Naive thymus-derived CD4-positive, alpha-beta T cell (primary cell): ENCODE measurements at regions of chr2 and their contacts with region 1.

Region 1: DNA sequence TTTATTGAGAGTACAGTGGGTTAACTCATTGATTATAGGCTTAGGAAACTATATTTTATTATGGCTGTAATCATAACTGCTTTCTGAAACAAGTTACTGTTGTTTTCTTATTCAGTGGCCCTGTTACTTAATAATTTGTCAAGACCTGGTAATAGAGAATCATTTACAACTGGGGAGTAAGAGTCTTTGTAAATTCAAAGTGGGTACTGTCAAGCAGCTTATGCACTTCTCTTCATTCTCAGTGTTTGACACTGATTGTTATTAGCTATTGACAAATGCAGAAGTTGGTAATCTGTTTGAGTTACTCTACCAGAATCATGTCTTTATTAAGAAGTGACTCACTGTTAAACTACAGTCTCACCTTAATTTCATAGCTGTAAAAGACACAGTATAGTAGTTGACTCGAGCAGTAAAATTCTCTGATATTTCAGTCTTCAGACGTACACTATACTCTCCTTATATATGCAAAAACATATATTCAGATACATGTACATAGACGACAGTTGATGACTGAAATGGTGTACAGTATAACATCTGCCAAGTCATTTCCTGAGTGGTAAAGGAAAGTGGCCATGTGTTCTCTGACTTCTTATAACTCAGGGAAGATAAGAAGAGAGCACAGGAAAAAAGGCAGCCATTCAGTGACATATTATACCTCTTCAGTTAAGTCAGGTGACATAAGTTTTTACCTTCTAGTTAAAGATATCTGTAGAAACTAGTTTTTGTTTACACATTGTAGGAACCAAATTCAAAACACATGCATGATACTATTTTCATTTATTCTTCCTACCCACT is 36.0 kb upstream of the TTC27 start:
- DNase-seq: peak in 6 of 9 donors; percentile 5 to 42 (median 25)
- ATAC-seq: peak; percentile 85
- H3K4me3 ChIP-seq: no peak overlapping the region
- H3K4me3 Mint-ChIP-seq: peak overlapping the region in 5 of 10 donors; percentile 8 to 58 (median 28)
- H3K27ac ChIP-seq: no peak overlapping the region
- H3K27ac Mint-ChIP-seq: peak overlapping the region; percentile 47 to 87 (median 72)
- H3K4me1 ChIP-seq: peaks cover 0 to 5% of the 10 kb centered on the region in 2 donors
- H3K4me1 Mint-ChIP-seq: peaks cover 6 to 45% (median 37%) of the 10 kb centered on the region in 7 donors
- H3K27me3 ChIP-seq: no peaks in the 10 kb centered on the region
- H3K27me3 Mint-ChIP-seq: no peaks in the 10 kb centered on the region

Region 2: GRCh38 chr2:31762085-31762484 is 829.8 kb before region 1 on chr2:
- CTCF ChIA-PET with region 1: no interaction called
- POLR2A ChIA-PET with region 1: no interaction called
- intact Hi-C with region 1: no loop called
- DNase-seq: no peak
- ATAC-seq: no peak
- H3K4me3 ChIP-seq: no peak overlapping the region
- H3K4me3 Mint-ChIP-seq: no peak overlapping the region
- H3K27ac ChIP-seq: no peak overlapping the region
- H3K27ac Mint-ChIP-seq: no peak overlapping the region
- H3K4me1 ChIP-seq: no peaks in the 10 kb centered on the region
- H3K4me1 Mint-ChIP-seq: no peaks in the 10 kb centered on the region
- H3K27me3 ChIP-seq: no peaks in the 10 kb centered on the region
- H3K27me3 Mint-ChIP-seq: peaks cover 0 to 10% (median 4%) of the 10 kb centered on the region in 5 donors

Region 3: DNA sequence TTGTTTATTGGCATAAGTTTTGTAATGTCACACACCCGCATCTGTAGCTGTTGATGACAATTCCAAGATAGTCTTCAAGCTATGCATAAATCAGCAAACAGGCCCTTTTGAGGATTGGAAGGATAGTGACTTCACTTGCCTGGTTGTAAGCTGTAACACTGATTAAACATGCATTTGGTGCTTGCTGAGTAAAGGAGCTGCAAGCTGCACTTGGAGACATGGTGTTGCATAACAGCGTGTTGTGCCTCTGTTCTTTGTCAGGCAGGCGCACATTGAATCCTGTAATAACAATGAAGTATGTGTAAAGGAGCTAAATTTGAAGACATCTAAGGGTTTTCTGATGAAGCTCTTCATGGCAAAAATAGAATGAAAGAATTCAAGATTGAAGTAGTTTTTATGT is 32.7 kb before region 1 on chr2:
- CTCF ChIA-PET with region 1: no interaction called
- POLR2A ChIA-PET with region 1: no interaction called
- intact Hi-C with region 1: loop called in 1 of 2 experiments (anchors 5 kb)
- DNase-seq: no peak
- ATAC-seq: no peak
- H3K4me3 ChIP-seq: no peak overlapping the region
- H3K4me3 Mint-ChIP-seq: no peak overlapping the region
- H3K27ac ChIP-seq: no peak overlapping the region
- H3K27ac Mint-ChIP-seq: peak overlapping the region in 3 of 9 donors; percentile 17 to 51 (median 42)
- H3K4me1 ChIP-seq: no peaks in the 10 kb centered on the region
- H3K4me1 Mint-ChIP-seq: peaks cover 0 to 10% (median 3%) of the 10 kb centered on the region in 7 donors
- H3K27me3 ChIP-seq: no peaks in the 10 kb centered on the region
- H3K27me3 Mint-ChIP-seq: no peaks in the 10 kb centered on the region

Region 4: DNA sequence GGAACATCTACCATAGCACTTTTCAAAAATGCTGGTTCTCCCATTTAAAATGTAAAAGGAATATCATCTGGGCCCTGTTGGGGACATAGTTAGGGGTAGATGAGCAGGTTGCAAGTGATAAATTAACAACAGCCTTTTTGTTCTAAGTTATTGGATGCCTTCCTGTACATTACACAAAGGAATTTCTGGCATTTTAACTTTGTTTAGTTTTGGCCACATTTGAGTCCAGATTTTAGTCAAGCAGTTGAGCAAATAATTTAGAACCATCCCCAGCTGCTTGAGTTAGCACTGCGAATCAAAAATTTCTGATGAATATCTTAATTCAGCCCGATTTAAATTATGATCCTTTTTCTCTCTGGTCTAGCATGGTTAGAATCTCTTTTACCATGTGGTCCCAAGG is 160.3 kb after region 1 on chr2:
- CTCF ChIA-PET with region 1: no interaction called
- POLR2A ChIA-PET with region 1: no interaction called
- intact Hi-C with region 1: no loop called
- DNase-seq: no peak
- ATAC-seq: no peak
- H3K4me3 ChIP-seq: no peak overlapping the region
- H3K4me3 Mint-ChIP-seq: no peak overlapping the region
- H3K27ac ChIP-seq: no peak overlapping the region
- H3K27ac Mint-ChIP-seq: peak overlapping the region in 1 of 9 donors; percentile 55
- H3K4me1 ChIP-seq: no peaks in the 10 kb centered on the region
- H3K4me1 Mint-ChIP-seq: peaks cover 6 to 25% (median 16%) of the 10 kb centered on the region in 7 donors
- H3K27me3 ChIP-seq: no peaks in the 10 kb centered on the region
- H3K27me3 Mint-ChIP-seq: no peaks in the 10 kb centered on the region

Region 5: GRCh38 chr2:32882816-32883810 is 291.2 kb after region 1 on chr2:
- CTCF ChIA-PET with region 1: no interaction called
- POLR2A ChIA-PET with region 1: no interaction called
- intact Hi-C with region 1: no loop called
- DNase-seq: no peak
- ATAC-seq: no peak
- H3K4me3 ChIP-seq: no peak overlapping the region
- H3K4me3 Mint-ChIP-seq: no peak overlapping the region
- H3K27ac ChIP-seq: no peak overlapping the region
- H3K27ac Mint-ChIP-seq: no peak overlapping the region
- H3K4me1 ChIP-seq: no peaks in the 10 kb centered on the region
- H3K4me1 Mint-ChIP-seq: no peaks in the 10 kb centered on the region
- H3K27me3 ChIP-seq: no peaks in the 10 kb centered on the region
- H3K27me3 Mint-ChIP-seq: peaks cover 0 to 8% (median 4%) of the 10 kb centered on the region in 5 donors